Endothelial cell of umbilical vein (primary cell): ENCODE measurements at regions of chr15 and their contacts with region 1.

Region 1: GRCh38 chr15:42137431-42138261 is 18.8 kb downstream of the PLA2G4F start:
- DNase-seq: peak; percentile 66
- H3K4me3 ChIP-seq: no peak overlapping the region
- H3K27ac ChIP-seq: no peak overlapping the region
- H3K4me1 ChIP-seq: no peaks in the 10 kb centered on the region
- H3K27me3 ChIP-seq: peaks cover 4 to 10% of the 10 kb centered on the region in 2 experiments
- CTCF ChIP-seq: peak; percentile 43 to 52
- POLR2A ChIP-seq: no peak

Region 2: GRCh38 chr15:41989259-41989933 is 148.2 kb before region 1 on chr15:
- CTCF ChIA-PET with region 1: interaction called, 31 read pairs
- POLR2A ChIA-PET with region 1: no interaction called
- dilution Hi-C with region 1: no loop called
- intact Hi-C with region 1: loop called (anchors 1 kb)
- DNase-seq: peak; percentile 77
- H3K4me3 ChIP-seq: no peak overlapping the region
- H3K27ac ChIP-seq: no peak overlapping the region
- H3K4me1 ChIP-seq: peaks cover 5% of the 10 kb centered on the region
- H3K27me3 ChIP-seq: no peaks in the 10 kb centered on the region
- CTCF ChIP-seq: peak; percentile 93 to 97
- POLR2A ChIP-seq: no peak

Region 3: GRCh38 chr15:42065033-42065432 is 72.6 kb before region 1 on chr15:
- CTCF ChIA-PET with region 1: interaction called, 96 read pairs
- POLR2A ChIA-PET with region 1: no interaction called
- dilution Hi-C with region 1: no loop called
- intact Hi-C with region 1: loop called (anchors 1 kb)
- DNase-seq: peak; percentile 34
- H3K4me3 ChIP-seq: no peak overlapping the region
- H3K27ac ChIP-seq: no peak overlapping the region
- H3K4me1 ChIP-seq: no peaks in the 10 kb centered on the region
- H3K27me3 ChIP-seq: no peaks in the 10 kb centered on the region
- CTCF ChIP-seq: no peak
- POLR2A ChIP-seq: no peak

Region 4: GRCh38 chr15:42072141-42072685 is 65.4 kb before region 1 on chr15:
- CTCF ChIA-PET with region 1: interaction called, 96 read pairs
- POLR2A ChIA-PET with region 1: no interaction called
- dilution Hi-C with region 1: no loop called
- intact Hi-C with region 1: no loop called
- DNase-seq: no peak
- H3K4me3 ChIP-seq: no peak overlapping the region
- H3K27ac ChIP-seq: no peak overlapping the region
- H3K4me1 ChIP-seq: no peaks in the 10 kb centered on the region
- H3K27me3 ChIP-seq: no peaks in the 10 kb centered on the region
- CTCF ChIP-seq: no peak
- POLR2A ChIP-seq: no peak

Region 5: DNA sequence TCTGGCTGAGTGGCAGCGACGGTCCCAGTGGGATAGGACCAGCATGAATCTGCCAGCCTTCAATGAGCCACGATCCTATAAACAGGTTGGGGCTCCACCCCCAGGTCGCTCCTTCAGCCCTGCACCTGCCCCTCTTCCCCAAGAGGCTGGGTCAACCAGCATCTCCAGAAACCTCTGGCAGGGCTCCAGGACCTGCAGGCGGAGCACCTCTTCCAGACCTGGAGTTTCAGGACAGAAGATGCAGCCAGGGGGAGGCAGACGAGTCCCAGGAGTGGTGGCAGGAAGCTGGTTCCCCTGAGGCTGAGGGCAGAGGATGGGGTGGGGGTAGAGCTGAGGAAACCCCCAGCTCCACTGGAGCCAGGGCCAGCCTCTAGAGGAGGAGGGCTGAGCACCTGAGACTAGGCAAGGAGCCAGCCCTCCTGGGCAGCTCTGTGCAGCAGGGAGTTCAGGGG is 43.1 kb before region 1 on chr15 and contains the start of gene PLA2G4D:
- CTCF ChIA-PET with region 1: interaction called, 11 read pairs
- POLR2A ChIA-PET with region 1: no interaction called
- dilution Hi-C with region 1: no loop called
- intact Hi-C with region 1: no loop called
- DNase-seq: no peak
- H3K4me3 ChIP-seq: no peak within 1 kb of the TSS
- H3K27ac ChIP-seq: no peak within 1 kb of the TSS
- H3K4me1 ChIP-seq: no peaks in the 10 kb centered on the region
- H3K27me3 ChIP-seq: peaks cover 2 to 7% of the 10 kb centered on the region in 2 experiments
- CTCF ChIP-seq: no peak
- POLR2A ChIP-seq: no peak
- total RNA-seq, gene PLA2G4D: not detected in 2 replicates

Region 6: GRCh38 chr15:42118650-42119445 is 18.8 kb before region 1 on chr15:
- CTCF ChIA-PET with region 1: interaction called, 18 read pairs
- POLR2A ChIA-PET with region 1: no interaction called
- dilution Hi-C with region 1: no loop called
- intact Hi-C with region 1: no loop called
- DNase-seq: no peak
- H3K4me3 ChIP-seq: no peak overlapping the region
- H3K27ac ChIP-seq: no peak overlapping the region
- H3K4me1 ChIP-seq: no peaks in the 10 kb centered on the region
- H3K27me3 ChIP-seq: peaks cover 17 to 33% of the 10 kb centered on the region in 2 experiments
- CTCF ChIP-seq: no peak
- POLR2A ChIP-seq: no peak

Region 7: GRCh38 chr15:42548253-42549031 is 410.8 kb after region 1 on chr15 and contains the starts of genes HAUS2 and LRRC57:
- CTCF ChIA-PET with region 1: no interaction called
- POLR2A ChIA-PET with region 1: no interaction called
- dilution Hi-C with region 1: no loop called
- intact Hi-C with region 1: no loop called
- DNase-seq: peak; percentile 88
- H3K4me3 ChIP-seq: peak within 1 kb of the TSS; percentile 65 to 96 (median 89)
- H3K27ac ChIP-seq: peak within 1 kb of the TSS; percentile 41
- H3K4me1 ChIP-seq: peaks cover 27% of the 10 kb centered on the region
- H3K27me3 ChIP-seq: no peaks in the 10 kb centered on the region
- CTCF ChIP-seq: no peak
- POLR2A ChIP-seq: peak; percentile 95
- total RNA-seq, gene HAUS2: 33.5 and 37.8 TPM in 2 replicates
- total RNA-seq, gene LRRC57: 32.8 and 39.2 TPM in 2 replicates

Region 8: DNA sequence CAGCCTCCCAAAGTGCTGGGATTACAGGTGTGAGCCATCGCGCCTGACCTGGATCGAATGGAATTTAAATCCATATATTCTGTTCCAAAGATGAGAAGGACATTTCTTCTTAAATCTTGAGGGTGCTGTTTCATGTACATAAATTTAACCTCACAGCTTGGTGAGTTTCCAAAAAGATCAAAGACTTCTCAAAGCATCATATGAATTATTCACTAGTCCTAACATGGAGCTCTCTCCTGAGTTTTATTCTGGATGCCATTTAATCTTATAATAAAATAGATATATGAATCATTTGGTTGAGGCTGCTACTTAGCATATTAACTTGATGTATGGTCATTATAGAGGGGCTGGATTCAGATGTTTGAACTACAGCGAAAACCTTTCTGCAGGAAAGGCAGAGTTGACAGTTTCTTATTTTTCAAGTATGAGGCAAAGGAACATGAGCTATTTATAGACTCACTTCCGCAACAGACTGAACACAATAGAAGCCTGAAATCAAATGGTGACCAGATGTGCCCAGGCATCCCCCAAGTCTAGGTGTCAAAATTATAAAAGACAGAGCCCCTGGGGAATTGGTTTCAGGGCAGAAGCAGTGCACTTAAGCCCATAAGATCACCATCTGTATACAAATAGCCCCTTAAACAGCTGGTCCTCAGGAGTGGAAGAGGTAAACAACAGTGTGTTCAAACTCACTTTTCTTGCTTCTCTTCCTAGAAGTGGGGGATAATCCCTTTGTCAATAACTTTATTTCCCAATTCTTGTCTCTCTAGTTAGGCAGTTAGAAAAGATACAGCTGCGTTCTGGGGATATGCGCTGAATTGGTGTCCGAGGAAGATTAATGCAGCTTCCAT is 467.5 kb after region 1 on chr15:
- CTCF ChIA-PET with region 1: no interaction called
- POLR2A ChIA-PET with region 1: no interaction called
- dilution Hi-C with region 1: no loop called
- intact Hi-C with region 1: no loop called
- DNase-seq: peak; percentile 81
- H3K4me3 ChIP-seq: peak overlapping the region in 1 of 3 experiments; percentile 8
- H3K27ac ChIP-seq: peak overlapping the region; percentile 53
- H3K4me1 ChIP-seq: peaks cover 14% of the 10 kb centered on the region
- H3K27me3 ChIP-seq: no peaks in the 10 kb centered on the region
- CTCF ChIP-seq: no peak
- POLR2A ChIP-seq: no peak